Caco-2 (cell line): ENCODE measurements at regions of chr6 and their contacts with region 1.

Region 1: DNA sequence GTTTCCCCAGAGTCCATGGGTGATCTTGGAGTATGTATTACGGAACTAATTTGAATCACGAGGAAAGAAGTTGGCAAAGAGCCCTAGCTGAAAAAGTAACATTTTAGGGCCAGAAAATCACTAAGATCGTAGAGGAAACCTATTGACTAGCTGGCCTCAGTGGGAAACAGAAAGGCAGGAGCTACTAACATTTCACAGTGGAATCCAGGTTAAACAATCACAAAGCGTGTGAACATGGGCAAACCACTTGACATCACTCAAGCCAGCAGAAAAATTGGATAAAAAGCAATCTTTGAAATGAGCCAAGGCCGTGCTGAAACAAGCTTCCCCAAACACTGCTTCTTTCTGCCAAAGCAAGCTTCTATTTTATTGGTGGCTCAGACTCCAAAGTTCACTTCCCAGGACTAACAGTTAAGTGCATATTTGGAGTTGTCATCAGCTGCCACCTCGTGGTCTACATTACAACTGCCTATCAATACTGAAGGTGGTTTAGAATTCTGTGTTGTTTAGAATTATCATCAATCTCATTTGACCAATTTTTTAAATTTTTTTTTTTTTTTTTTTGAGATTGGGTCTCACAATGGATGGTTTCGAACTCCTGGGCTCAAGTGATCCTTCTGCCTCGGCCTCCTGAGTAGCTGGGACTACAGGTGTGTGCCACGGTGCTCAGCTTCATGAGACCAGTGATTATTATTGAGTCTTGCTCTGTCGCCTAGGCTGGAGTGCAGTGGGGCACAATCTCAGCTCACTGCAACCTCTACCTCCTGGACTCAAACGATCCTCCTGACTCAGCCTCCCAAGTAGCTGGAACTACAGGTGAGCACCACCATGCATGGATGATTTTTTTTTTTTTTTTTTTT is 10.6 kb downstream of the RPS10 start:
- DNase-seq: peak; percentile 69 to 72
- H3K4me3 ChIP-seq: no peak overlapping the region
- H3K4me3 Mint-ChIP-seq: no peak overlapping the region
- H3K27ac Mint-ChIP-seq: peak overlapping the region; percentile 48
- H3K4me1 ChIP-seq: peaks cover 5% of the 10 kb centered on the region
- H3K4me1 Mint-ChIP-seq: no peaks in the 10 kb centered on the region
- H3K27me3 ChIP-seq: no peaks in the 10 kb centered on the region
- H3K27me3 Mint-ChIP-seq: no peaks in the 10 kb centered on the region
- CTCF ChIP-seq: peak; percentile 49 to 68

Region 2: DNA sequence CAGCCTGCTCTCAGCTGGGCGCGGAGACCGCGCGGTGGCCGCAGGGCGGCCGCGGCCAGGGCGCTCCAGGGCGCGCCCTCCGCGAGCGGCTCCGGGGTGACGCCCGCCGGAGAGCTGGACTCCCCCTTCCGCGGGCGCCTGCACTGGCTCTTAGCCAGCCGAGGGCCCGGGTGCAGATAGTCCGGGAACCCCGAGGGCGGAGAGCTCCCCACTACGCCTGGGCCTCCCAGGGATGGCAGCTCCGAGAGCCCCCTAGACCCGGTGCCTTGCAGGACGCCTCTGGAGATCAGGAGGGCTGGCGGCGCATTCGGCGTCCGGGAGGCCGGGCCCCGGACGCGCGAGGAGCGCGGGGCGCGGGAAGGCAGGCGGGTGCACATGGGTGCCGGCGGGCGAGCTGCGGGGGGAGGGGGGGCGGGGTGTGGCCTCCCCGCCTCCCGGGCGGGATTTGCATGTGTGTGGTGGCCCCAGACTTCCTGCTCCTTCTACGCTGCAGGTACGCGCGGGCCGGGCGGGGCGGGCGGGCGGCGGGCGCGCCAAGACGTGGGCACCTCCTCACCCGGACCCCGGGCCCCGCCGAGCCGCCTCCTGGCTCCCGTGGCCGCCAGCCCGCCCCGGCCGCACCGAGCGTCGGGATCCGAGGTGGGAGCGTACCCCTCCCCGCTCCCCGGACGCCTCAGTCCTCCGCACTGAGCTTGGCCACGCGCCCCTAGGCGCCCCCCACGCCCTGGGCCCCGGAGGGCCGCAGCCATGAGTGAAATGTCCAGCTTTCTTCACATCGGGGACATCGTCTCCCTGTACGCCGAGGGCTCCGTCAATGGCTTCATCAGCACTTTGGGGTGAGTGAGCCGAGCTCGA is 794.1 kb before region 1 on chr6 and contains the start of gene ITPR3:
- CTCF ChIA-PET with region 1: no interaction called
- POLR2A ChIA-PET with region 1: no interaction called
- intact Hi-C with region 1: no loop called
- DNase-seq: peak; percentile 62 to 77
- H3K4me3 ChIP-seq: peak within 1 kb of the TSS; percentile 94
- H3K4me3 Mint-ChIP-seq: peak within 1 kb of the TSS; percentile 86
- H3K27ac Mint-ChIP-seq: peak within 1 kb of the TSS; percentile 68
- H3K4me1 ChIP-seq: peaks cover 30% of the 10 kb centered on the region
- H3K4me1 Mint-ChIP-seq: peaks cover 24% of the 10 kb centered on the region
- H3K27me3 ChIP-seq: no peaks in the 10 kb centered on the region
- H3K27me3 Mint-ChIP-seq: no peaks in the 10 kb centered on the region
- CTCF ChIP-seq: no peak
- total RNA-seq, gene ITPR3: 42.1 and 50.5 TPM in 2 replicates

Region 3: DNA sequence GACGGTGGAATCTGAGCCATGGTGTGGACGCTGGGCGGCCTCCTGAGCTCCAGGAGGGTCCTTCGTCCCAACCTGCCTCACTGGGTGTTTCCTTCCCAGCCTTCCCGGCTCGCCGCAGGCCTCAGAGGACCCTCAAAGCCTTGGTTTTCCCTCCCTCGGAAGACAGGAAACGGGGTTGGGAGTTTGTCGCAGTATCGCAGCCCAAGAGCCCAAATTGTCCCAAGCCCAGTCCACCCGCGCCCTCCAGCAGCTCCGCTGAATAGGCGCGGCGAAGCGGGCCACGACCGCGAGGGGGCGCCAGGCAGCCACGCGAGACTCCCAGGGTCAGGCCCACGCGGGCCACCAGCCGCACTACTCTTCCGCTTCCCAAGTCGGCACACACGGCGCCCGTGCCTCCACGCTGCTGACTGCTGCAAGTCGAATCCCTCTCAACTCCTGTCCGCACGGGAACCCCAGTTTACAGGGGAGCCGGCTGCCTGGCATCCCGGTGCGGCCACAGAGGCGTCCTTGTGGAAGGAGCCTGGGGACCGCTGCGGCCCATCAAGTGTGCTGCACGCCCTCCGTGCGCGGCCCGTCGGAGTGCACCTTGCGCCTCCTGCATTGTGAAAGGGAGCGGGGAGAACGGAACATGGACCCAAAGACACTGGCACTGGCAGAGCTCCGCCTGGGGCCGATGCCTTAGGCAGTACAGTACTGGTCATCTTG is 219.0 kb before region 1 on chr6:
- CTCF ChIA-PET with region 1: interaction called, 29 read pairs
- POLR2A ChIA-PET with region 1: interaction called, 4 read pairs
- intact Hi-C with region 1: loop called (anchors 1 kb)
- DNase-seq: peak; percentile 61 to 79
- H3K4me3 ChIP-seq: peak overlapping the region; percentile 38
- H3K4me3 Mint-ChIP-seq: peak overlapping the region; percentile 67
- H3K27ac Mint-ChIP-seq: no peak overlapping the region
- H3K4me1 ChIP-seq: peaks cover 4% of the 10 kb centered on the region; the same call in 1 of the 2 replicates
- H3K4me1 Mint-ChIP-seq: no peaks in the 10 kb centered on the region
- H3K27me3 ChIP-seq: no peaks in the 10 kb centered on the region
- H3K27me3 Mint-ChIP-seq: peaks cover 2% of the 10 kb centered on the region
- CTCF ChIP-seq: peak; percentile 86 to 93

Region 4: DNA sequence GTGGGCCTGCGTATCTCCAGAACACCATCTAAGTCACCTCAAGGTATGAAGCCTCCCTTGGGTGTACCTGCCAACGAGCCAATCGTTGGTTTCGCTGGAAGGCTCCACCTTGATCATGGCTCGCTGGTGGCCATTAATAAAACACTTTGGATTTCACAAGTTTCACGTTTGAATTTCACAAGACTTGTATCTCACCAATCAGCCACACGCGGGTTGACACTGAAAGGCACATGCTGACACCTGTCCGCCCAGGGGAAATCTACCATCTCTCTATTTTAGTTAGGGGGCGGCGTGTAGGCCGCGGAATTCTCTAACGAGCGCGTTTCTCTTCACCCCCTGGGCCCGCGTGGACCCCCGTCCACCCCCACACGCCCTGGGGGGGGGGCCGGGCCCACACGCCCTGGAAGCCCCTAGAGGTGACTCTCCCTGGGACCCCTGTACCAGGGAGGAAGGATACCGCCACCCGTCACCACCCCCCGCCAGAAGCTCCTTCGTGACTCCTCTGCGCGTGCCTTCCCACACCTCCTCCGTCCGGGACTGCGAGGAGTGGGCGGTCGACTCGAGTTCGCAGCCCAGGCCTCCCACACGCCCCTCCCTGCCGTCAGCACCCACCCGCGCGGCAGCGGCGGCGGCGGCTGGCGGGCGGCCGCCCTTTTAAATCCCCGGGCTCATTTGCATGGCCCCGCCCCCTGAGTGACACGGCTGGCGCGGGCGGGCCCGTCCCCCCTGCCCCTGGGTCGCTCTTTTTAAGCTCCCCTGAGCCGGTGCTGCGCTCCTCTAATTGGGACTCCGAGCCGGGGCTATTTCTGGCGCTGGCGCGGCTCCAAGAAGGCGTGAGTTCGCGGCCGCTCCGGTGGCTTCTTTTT is 178.9 kb before region 1 on chr6 and contains the start of gene HMGA1:
- CTCF ChIA-PET with region 1: interaction called, 6 read pairs
- POLR2A ChIA-PET with region 1: interaction called, 10 read pairs
- intact Hi-C with region 1: no loop called
- DNase-seq: peak; percentile 85 to 86
- H3K4me3 ChIP-seq: peak within 1 kb of the TSS; percentile 66
- H3K4me3 Mint-ChIP-seq: peak within 1 kb of the TSS; percentile 71
- H3K27ac Mint-ChIP-seq: peak within 1 kb of the TSS; percentile 67
- H3K4me1 ChIP-seq: peaks cover 29% of the 10 kb centered on the region
- H3K4me1 Mint-ChIP-seq: no peaks in the 10 kb centered on the region
- H3K27me3 ChIP-seq: no peaks in the 10 kb centered on the region
- H3K27me3 Mint-ChIP-seq: no peaks in the 10 kb centered on the region
- CTCF ChIP-seq: no peak
- total RNA-seq, gene HMGA1: 301 and 322 TPM in 2 replicates

Region 5: DNA sequence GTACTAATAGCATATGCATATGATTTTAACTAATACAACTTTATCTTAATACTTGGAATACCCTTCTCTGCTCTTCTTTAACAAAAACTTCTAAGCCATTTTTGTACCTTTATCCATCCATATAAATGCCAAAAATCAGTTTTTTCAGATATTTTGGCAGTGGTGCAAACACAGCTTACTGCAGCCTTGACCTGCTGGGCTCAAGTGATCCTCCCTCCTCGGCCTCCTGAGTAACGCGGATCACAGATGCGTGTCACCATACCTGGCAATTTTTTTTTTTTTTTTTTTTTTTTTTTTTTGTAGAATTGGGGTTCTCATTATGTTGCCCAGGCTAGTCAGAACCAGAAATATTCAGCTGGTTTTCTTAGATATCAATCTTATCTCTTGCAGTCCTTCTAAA is 112.3 kb before region 1 on chr6:
- CTCF ChIA-PET with region 1: interaction called, 7 read pairs
- POLR2A ChIA-PET with region 1: interaction called, 14 read pairs
- intact Hi-C with region 1: no loop called
- DNase-seq: no peak
- H3K4me3 ChIP-seq: no peak overlapping the region
- H3K4me3 Mint-ChIP-seq: no peak overlapping the region
- H3K27ac Mint-ChIP-seq: no peak overlapping the region
- H3K4me1 ChIP-seq: peaks cover 22% of the 10 kb centered on the region
- H3K4me1 Mint-ChIP-seq: peaks cover 17% of the 10 kb centered on the region
- H3K27me3 ChIP-seq: no peaks in the 10 kb centered on the region
- H3K27me3 Mint-ChIP-seq: no peaks in the 10 kb centered on the region
- CTCF ChIP-seq: no peak

Region 6: DNA sequence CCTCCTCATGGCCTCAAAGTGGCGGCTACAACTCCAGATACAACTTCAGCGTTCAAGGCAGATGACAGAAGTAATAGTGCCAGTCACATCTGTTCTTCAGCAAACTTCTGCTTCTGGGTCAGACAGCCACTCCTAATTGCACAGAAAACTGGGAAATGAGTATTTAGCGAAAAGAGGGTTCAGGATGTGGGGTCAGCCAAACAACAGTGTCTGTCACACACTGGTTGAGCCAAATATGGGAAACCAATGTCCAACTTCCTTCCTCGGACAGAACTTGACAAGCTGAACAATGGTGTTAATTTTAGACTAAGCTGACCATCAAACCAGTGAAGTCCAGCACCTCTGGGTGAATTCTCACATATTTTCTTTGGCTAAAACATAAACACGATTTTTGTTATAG is 44.9 kb before region 1 on chr6:
- CTCF ChIA-PET with region 1: no interaction called
- POLR2A ChIA-PET with region 1: no interaction called
- intact Hi-C with region 1: no loop called
- DNase-seq: no peak
- H3K4me3 ChIP-seq: no peak overlapping the region
- H3K4me3 Mint-ChIP-seq: no peak overlapping the region
- H3K27ac Mint-ChIP-seq: no peak overlapping the region
- H3K4me1 ChIP-seq: peaks cover 9% of the 10 kb centered on the region
- H3K4me1 Mint-ChIP-seq: no peaks in the 10 kb centered on the region
- H3K27me3 ChIP-seq: no peaks in the 10 kb centered on the region
- H3K27me3 Mint-ChIP-seq: no peaks in the 10 kb centered on the region
- CTCF ChIP-seq: no peak

Region 7: DNA sequence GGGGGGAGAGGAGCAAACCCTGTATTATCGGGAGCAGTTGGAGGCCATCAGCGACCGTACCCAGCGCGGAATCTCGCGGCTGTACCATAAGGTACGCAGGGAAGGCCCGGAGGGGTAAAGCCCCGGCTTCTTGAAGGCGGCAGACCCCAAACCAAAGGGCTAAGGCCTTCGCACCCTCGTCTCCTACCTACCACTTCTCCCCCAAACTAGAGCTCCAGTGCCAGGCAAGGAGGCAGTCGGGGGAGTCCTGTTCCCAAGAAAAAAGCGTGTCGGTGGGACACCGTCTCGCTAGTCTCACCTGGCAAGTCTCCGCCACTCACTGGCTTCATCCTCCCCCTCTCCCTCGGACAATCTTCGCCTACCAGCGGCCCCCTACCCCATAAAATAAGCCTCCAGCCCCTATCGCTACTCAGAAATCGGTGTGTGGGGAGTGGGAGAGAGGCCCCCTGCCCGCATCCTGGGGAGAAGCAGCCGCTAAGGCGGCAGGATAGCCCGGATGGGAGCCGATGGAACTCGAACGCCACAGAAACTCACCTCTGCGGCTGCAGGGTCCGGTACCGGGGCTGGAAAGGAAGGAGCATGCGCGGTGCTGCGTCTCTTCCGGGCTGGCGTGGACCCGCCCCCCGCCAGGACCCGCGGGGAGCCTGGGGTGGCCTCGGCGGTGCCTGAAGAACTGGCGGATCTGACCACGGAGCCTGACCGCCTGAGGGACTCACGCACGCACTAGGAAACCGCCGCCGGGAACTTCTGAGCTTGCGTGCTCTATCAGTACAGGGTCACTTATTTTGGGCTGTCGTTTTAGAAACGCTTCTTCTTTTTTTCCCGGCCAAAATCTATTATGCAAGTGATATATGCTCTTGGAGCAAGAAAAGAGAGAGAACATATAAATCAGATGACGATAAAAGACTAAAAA is 10.5 kb after region 1 on chr6 and contains the start of gene RPS10:
- CTCF ChIA-PET with region 1: interaction called, 16 read pairs
- POLR2A ChIA-PET with region 1: interaction called, 13 read pairs
- intact Hi-C with region 1: no loop called
- DNase-seq: peak; percentile 93 to 97
- H3K4me3 ChIP-seq: peak within 1 kb of the TSS; percentile 96
- H3K4me3 Mint-ChIP-seq: peak within 1 kb of the TSS; percentile 94
- H3K27ac Mint-ChIP-seq: peak within 1 kb of the TSS; percentile 98
- H3K4me1 ChIP-seq: peaks cover 13% of the 10 kb centered on the region
- H3K4me1 Mint-ChIP-seq: no peaks in the 10 kb centered on the region
- H3K27me3 ChIP-seq: no peaks in the 10 kb centered on the region
- H3K27me3 Mint-ChIP-seq: no peaks in the 10 kb centered on the region
- CTCF ChIP-seq: peak in 1 of 2 experiments; percentile 26
- total RNA-seq, gene RPS10: 1,650 and 1,752 TPM in 2 replicates

Region 8: DNA sequence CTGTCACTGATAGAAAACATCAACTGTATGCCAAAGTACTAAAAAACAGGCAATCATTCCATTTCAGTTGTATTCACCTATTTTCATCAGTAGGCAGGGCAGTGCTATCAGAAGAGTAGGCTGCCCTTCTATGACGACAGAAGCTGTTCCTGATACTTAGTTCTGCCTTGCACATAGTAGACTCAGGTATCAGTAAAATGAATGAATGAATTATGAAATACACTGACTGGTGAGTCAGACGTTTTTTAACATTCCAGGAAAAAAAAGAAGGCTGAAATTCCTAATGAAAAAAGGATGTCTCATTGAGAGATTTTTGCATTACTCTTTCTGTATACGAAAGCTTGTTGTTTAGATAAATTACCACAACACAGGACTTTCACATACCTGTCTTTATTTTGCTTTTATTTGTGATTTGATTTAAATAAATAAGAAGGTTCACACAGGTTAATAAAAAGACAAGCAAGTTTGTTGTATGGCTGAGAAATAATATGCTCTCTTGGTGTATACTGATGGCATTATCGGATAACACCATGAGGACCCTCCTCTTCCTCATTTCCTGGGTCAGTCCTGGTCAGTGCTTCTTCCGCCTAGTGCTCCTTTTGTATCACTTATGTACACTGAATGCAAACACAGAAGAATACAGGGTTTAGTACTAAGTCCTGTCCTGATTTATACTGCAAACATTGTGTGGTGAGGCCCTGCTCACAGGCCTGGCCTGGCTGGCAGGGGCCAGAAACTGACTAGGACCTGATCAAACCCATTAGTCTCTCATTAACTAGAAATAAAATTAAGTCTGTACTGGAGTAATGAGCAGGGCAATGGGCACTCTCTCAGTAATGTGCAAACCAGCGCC is 180.3 kb after region 1 on chr6:
- CTCF ChIA-PET with region 1: no interaction called
- POLR2A ChIA-PET with region 1: no interaction called
- intact Hi-C with region 1: no loop called
- DNase-seq: no peak
- H3K4me3 ChIP-seq: no peak overlapping the region
- H3K4me3 Mint-ChIP-seq: no peak overlapping the region
- H3K27ac Mint-ChIP-seq: no peak overlapping the region
- H3K4me1 ChIP-seq: peaks cover 61% of the 10 kb centered on the region
- H3K4me1 Mint-ChIP-seq: peaks cover 36% of the 10 kb centered on the region
- H3K27me3 ChIP-seq: no peaks in the 10 kb centered on the region
- H3K27me3 Mint-ChIP-seq: no peaks in the 10 kb centered on the region
- CTCF ChIP-seq: no peak